PC-3 (cell line): ENCODE measurements at regions of chr5 and their contacts with region 1.

Region 1: GRCh38 chr5:122515709-122516431 is 203.8 kb downstream of the SNCAIP start:
- DNase-seq: peak; percentile 64
- ATAC-seq: peak; percentile 89
- H3K4me3 ChIP-seq: no peak overlapping the region
- H3K27ac ChIP-seq: no peak overlapping the region
- H3K4me1 ChIP-seq: no peaks in the 10 kb centered on the region
- H3K27me3 ChIP-seq: no peaks in the 10 kb centered on the region
- CTCF ChIP-seq: peak; percentile 81

Region 2: DNA sequence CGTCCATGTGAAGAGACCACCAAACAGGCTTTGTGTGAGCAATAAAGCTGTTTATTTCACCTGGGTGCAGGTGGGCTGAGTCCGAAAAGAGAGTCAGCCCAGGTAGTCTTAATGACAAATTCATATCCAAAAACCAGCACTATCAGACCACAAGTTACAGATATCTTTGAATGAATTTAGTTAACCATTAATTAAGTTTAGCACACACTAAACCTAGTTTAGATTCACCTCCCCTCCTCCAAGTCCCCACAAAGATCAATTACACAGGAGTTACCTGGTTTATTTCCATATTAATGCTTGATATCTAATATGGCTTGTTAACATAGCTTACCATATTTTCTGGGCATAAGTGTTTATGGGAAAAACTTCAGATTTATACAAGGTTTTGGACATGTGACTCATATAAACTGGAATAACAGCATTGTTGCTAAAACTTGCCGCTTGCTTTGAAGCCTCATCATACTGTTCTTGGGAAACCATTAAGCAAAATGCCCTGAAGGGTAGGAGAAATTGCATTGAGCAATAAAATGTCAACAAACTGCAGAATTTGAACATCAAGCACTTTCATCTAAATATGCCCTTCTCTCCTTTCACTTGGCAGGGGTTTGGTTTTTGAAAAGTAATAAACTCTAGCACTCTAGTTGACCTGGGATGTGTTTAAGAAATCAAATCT is 37.0 kb before region 1 on chr5:
- CTCF ChIA-PET with region 1: no interaction called
- POLR2A ChIA-PET with region 1: no interaction called
- intact Hi-C with region 1: no loop called
- DNase-seq: peak; percentile 93
- ATAC-seq: no peak
- H3K4me3 ChIP-seq: no peak overlapping the region
- H3K27ac ChIP-seq: peak overlapping the region; percentile 70
- H3K4me1 ChIP-seq: peaks cover 19% of the 10 kb centered on the region
- H3K27me3 ChIP-seq: no peaks in the 10 kb centered on the region
- CTCF ChIP-seq: no peak

Region 3: GRCh38 chr5:122999945-123000563 is 484.2 kb after region 1 on chr5:
- CTCF ChIA-PET with region 1: no interaction called
- POLR2A ChIA-PET with region 1: no interaction called
- intact Hi-C with region 1: loop called (anchors 1 kb)
- DNase-seq: peak; percentile 53
- ATAC-seq: no peak
- H3K4me3 ChIP-seq: no peak overlapping the region
- H3K27ac ChIP-seq: no peak overlapping the region
- H3K4me1 ChIP-seq: no peaks in the 10 kb centered on the region
- H3K27me3 ChIP-seq: no peaks in the 10 kb centered on the region
- CTCF ChIP-seq: peak; percentile 72

Region 4: GRCh38 chr5:123344816-123345426 is 829.1 kb after region 1 on chr5:
- CTCF ChIA-PET with region 1: no interaction called
- POLR2A ChIA-PET with region 1: no interaction called
- intact Hi-C with region 1: loop called (anchors 2 kb)
- DNase-seq: peak; percentile 34
- ATAC-seq: peak; percentile 46
- H3K4me3 ChIP-seq: no peak overlapping the region
- H3K27ac ChIP-seq: no peak overlapping the region
- H3K4me1 ChIP-seq: no peaks in the 10 kb centered on the region
- H3K27me3 ChIP-seq: no peaks in the 10 kb centered on the region
- CTCF ChIP-seq: peak; percentile 76